Tibial artery (tissue), 4 donors: ENCODE measurements at regions of chr7 and their contacts with region 1.

Region 1: GRCh38 chr7:74070619-74070921 is 13.0 kb upstream of the LIMK1 start:
- DNase-seq: no peak
- H3K4me3 ChIP-seq: no peak overlapping the region
- H3K27ac ChIP-seq: peak overlapping the region; percentile 52 to 64
- H3K4me1 ChIP-seq: no peaks in the 10 kb centered on the region
- H3K27me3 ChIP-seq: no peaks in the 10 kb centered on the region
- CTCF ChIP-seq: no peak

Region 2: GRCh38 chr7:72577107-72577506 is 1493.5 kb before region 1 on chr7:
- intact Hi-C with region 1: no loop called
- DNase-seq: no peak
- H3K4me3 ChIP-seq: no peak overlapping the region
- H3K27ac ChIP-seq: no peak overlapping the region
- H3K4me1 ChIP-seq: no peaks in the 10 kb centered on the region
- H3K27me3 ChIP-seq: no peaks in the 10 kb centered on the region
- CTCF ChIP-seq: no peak

Region 3: GRCh38 chr7:74187915-74188630 is 117.5 kb after region 1 on chr7:
- intact Hi-C with region 1: loop called (anchors 5 kb)
- DNase-seq: no peak
- H3K4me3 ChIP-seq: no peak overlapping the region
- H3K27ac ChIP-seq: no peak overlapping the region
- H3K4me1 ChIP-seq: peaks cover 0 to 59% (median 45%) of the 10 kb centered on the region in 4 donors
- H3K27me3 ChIP-seq: no peaks in the 10 kb centered on the region
- CTCF ChIP-seq: no peak